AG04449 (cell line): ENCODE measurements at regions of chr6 and their contacts with region 1.

Region 1: GRCh38 chr6:157873735-157874344 is 50.8 kb downstream of the SNX9 start:
- DNase-seq: no peak
- H3K4me3 ChIP-seq: no peak overlapping the region
- CTCF ChIP-seq: peak; percentile 88

Region 2: GRCh38 chr6:157764178-157765033 is 109.4 kb before region 1 on chr6:
- CTCF ChIA-PET with region 1: interaction called, 225 read pairs
- POLR2A ChIA-PET with region 1: no interaction called
- DNase-seq: peak; percentile 100
- H3K4me3 ChIP-seq: no peak overlapping the region
- CTCF ChIP-seq: no peak

Region 3: DNA sequence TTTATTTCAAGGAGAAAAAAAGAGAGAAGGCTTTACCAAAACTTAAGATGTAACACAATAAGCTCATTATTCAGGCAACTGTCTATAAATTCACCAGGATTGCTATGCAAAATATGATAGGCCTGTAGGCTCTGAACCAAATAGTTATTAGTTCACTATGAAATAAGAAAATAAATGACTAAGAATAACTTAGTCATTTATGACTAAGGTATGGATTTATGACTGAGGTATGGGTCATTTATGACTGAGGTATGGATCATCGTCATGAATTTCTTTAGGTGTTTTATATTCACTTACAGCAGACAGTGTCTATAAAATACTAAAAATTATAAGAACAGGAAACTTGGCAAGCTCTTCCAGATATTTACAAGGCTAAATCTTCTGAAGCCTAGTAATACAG is 102.9 kb before region 1 on chr6:
- CTCF ChIA-PET with region 1: interaction called, 11 read pairs
- POLR2A ChIA-PET with region 1: no interaction called
- DNase-seq: no peak
- H3K4me3 ChIP-seq: no peak overlapping the region
- CTCF ChIP-seq: no peak

Region 4: DNA sequence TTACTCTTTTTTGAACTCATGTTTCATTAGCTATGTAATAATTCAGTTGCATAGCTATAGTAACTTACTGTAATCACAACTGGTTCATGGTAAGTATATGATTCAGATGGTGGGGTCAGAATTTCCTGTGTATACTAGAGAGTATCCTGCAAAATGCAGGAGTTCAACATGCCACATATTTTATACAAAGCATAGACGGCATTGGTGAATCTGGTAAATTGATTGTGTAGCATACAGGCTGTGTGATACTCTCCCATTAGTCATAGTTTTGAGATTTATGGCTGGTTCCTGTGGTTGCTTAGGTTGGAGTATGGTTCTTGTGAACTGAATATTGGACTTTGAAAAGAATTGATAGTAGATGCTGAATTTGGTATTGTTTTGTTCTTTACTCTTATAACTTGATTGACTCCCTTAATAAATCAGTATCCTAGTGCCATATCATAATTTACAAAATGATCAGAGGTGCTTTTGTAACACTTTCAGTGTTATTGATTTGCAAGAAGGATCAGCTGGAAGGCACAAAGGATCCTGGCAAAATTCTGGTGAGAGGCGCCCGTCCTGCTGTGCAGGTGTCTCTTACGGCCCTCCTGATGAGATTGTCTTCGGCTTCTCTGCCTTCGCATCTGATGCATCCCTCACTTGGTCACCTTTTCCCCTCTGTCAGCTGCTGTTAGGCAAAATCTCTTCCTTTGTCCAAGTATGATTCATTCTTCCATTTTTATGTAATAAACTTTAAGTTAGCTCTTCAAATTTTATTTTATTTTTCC is 28.2 kb before region 1 on chr6:
- CTCF ChIA-PET with region 1: interaction called, 24 read pairs
- POLR2A ChIA-PET with region 1: no interaction called
- DNase-seq: no peak
- H3K4me3 ChIP-seq: no peak overlapping the region
- CTCF ChIP-seq: no peak

Region 5: DNA sequence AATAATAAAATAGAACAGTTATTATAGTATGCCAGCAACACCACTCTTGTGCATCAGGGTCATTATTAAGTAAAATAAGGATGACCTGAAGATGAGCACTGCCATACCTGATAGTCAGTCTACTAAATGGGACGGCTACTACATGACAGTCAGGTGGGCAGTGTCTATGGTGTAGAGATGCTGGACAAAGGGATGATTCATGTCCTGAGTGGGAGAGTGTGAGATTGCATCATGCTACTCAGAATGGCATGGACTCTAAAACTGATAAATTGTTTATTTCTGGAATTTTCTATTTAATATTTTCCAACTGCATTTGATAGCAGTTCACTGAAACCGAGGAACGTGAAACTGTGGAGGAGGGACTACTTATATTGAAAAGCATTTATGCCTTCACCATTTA is 12.0 kb before region 1 on chr6:
- CTCF ChIA-PET with region 1: interaction called, 33 read pairs
- POLR2A ChIA-PET with region 1: no interaction called
- DNase-seq: no peak
- H3K4me3 ChIP-seq: no peak overlapping the region
- CTCF ChIP-seq: no peak

Region 6: DNA sequence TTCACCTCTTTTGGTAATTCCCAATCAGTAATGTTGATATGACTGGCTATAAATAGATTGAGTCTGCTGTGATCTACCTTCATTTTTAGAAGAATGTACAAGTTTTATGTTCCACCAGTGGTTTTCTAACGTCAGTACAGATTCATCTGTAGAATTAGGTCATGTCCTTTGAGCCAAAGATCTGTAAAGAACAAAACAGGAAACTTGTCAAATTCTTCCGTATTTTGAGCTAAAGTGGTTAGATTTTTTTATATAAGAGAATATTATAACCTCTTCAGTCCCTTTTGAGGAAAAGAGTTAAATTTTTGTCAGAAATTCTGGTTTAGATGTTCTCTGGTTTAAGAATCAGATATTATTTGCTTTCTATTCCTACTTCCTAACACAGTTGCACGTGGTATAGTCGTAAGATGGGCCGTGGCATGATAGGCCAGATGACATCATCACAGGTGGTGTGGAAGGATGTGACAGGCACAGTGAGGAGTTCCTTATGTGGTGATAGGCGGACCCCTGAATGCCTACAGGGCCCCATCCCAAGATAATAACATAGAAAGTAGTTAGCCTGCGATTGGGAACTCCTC is 11.5 kb after region 1 on chr6:
- CTCF ChIA-PET with region 1: interaction called, 53 read pairs
- POLR2A ChIA-PET with region 1: no interaction called
- DNase-seq: no peak
- H3K4me3 ChIP-seq: no peak overlapping the region
- CTCF ChIP-seq: no peak

Region 7: GRCh38 chr6:157912326-157912725 is 38.5 kb after region 1 on chr6:
- CTCF ChIA-PET with region 1: interaction called, 10 read pairs
- POLR2A ChIA-PET with region 1: no interaction called
- DNase-seq: peak; percentile 90
- H3K4me3 ChIP-seq: no peak overlapping the region
- CTCF ChIP-seq: no peak